A673 (cell line): ENCODE measurements at regions of chr7 and their contacts with region 1.

Region 1: DNA sequence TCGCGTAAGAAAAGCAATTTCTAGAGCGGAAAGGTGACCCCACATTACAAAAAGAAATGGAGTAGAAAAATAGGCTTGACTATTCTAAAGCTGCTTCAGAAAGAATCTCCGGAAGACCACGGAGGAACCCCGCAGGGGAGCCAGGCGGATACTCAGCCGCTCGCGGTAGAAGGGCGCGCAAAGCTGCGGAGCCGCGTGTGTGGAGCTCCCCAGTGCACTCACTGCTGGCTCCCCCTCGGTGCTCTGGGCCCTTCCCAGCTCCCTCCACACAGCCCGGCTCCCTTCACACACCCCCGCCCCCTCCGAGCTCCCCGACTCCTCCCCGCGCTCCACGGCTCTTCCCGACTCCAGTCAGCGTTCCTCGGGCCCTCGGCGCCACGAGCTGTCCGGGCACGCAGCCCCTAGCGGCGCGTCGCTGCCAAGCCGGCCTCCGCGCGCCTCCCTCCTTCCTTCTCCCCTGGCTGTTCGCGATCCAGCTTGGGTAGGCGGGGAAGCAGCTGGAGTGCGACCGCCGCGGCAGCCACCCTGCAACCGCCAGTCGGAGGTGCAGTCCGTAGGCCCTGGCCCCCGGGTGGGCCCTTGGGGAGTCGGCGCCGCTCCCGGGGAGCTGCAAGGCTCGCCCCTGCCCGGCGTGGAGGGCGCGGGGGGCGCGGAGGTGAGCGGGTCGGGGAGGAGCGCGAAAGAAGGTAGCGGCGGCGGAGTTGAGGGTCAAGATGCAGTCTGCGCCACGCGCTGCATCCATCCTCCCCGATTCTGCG is at the start of gene STEAP2:
- DNase-seq: peak; percentile 99
- H3K4me3 ChIP-seq: peak within 1 kb of the TSS; percentile 88
- H3K27ac ChIP-seq: peak within 1 kb of the TSS; percentile 98
- H3K4me1 ChIP-seq: peaks cover 38% of the 10 kb centered on the region
- H3K27me3 ChIP-seq: no peaks in the 10 kb centered on the region
- CTCF ChIP-seq: peak; percentile 82
- total RNA-seq, gene STEAP2: 114 and 134 TPM in 2 replicates

Region 2: DNA sequence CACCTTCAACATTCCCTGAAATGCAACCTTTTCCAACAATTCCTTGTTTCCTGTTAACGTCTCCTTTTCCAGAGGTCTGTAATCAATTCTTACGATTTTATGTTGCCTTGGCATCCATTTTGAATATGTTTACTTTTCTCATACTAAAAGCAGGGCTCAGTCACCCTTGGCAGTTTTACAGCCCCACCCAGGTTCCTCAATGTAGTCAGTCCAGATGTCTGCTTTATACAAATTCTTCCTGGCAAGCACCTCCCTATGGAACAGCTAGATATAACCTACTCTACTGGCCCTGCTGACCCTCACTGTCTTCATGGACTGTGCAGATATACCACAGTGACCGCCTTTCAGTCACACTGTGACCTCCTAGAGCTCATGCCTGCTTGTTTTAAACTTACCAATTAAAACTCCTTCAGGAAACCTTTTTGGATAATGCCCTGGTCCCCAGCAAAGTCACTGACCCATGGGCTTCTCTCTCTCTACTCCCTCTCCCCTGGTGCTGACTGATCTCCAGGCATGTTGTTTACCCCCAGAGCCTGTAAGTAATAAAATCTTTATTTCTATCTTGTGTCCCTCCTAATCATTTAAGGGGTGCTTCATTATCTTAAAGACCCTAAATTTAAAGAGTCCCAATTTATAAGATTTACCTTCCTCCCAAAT is 204.4 kb before region 1 on chr7:
- CTCF ChIA-PET with region 1: no interaction called
- POLR2A ChIA-PET with region 1: no interaction called
- intact Hi-C with region 1: no loop called
- DNase-seq: no peak
- H3K4me3 ChIP-seq: no peak overlapping the region
- H3K27ac ChIP-seq: no peak overlapping the region
- H3K4me1 ChIP-seq: no peaks in the 10 kb centered on the region
- H3K27me3 ChIP-seq: peaks cover 37% of the 10 kb centered on the region
- CTCF ChIP-seq: no peak

Region 3: GRCh38 chr7:90178679-90179278 is 32.8 kb before region 1 on chr7:
- CTCF ChIA-PET with region 1: no interaction called
- POLR2A ChIA-PET with region 1: no interaction called
- intact Hi-C with region 1: no loop called
- DNase-seq: peak; percentile 56
- H3K4me3 ChIP-seq: peak overlapping the region; percentile 8
- H3K27ac ChIP-seq: peak overlapping the region; percentile 70
- H3K4me1 ChIP-seq: peaks cover 23% of the 10 kb centered on the region
- H3K27me3 ChIP-seq: no peaks in the 10 kb centered on the region
- CTCF ChIP-seq: no peak

Region 4: GRCh38 chr7:90194911-90195809 is 16.4 kb before region 1 on chr7:
- CTCF ChIA-PET with region 1: no interaction called
- POLR2A ChIA-PET with region 1: interaction called, 26 read pairs
- intact Hi-C with region 1: no loop called
- DNase-seq: no peak
- H3K4me3 ChIP-seq: no peak overlapping the region
- H3K27ac ChIP-seq: no peak overlapping the region
- H3K4me1 ChIP-seq: no peaks in the 10 kb centered on the region
- H3K27me3 ChIP-seq: no peaks in the 10 kb centered on the region
- CTCF ChIP-seq: no peak

Region 5: GRCh38 chr7:90271753-90272152 is 60.2 kb after region 1 on chr7:
- CTCF ChIA-PET with region 1: no interaction called
- POLR2A ChIA-PET with region 1: no interaction called
- intact Hi-C with region 1: no loop called
- DNase-seq: peak; percentile 10
- H3K4me3 ChIP-seq: no peak overlapping the region
- H3K27ac ChIP-seq: no peak overlapping the region
- H3K4me1 ChIP-seq: peaks cover 21% of the 10 kb centered on the region
- H3K27me3 ChIP-seq: no peaks in the 10 kb centered on the region
- CTCF ChIP-seq: no peak

Region 6: DNA sequence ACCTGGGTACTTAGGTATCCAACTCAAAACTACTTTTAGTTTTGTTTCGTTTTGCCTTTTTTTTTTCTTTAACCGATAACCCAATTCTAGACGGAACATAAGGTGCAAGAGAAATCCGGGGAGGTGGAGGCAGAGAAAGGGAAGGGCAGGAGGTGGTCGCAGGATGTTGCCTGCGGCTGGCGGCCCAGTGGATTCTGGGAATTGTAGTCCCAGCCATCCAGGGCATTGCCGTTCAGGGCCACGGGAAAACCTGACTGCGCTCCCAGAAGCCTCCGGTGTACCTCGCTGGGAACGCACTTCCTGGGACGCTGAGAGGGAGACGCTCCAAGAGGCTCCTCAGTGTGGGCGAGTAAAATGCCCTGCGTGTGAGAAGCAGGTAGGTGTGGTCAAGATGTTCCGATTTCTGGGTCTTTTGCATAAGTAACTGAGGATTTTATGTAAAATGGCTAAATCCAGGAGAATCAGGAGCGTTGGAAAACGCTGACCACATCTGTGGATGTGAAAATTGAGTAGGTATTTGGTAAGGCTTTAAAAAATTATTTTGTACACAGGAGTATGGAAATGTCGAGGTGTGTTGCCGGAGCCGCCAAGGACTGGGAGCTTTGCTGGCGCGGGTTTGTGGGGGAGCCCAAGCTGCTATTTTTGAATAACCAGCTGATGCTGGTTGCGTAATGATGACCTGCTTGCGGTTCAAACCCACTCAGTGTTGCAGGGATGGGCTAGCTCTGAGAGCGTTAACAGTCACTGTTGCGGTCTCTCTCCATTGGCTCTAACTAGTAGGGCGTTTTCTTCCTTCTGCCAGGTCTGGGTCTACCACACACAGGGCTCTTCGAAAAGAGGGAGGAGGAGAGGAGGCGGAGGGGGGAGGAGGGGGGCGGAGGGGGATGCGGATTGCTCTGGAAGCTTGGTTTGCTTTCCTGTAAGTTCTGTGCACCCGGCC is 191.9 kb after region 1 on chr7 and contains the start of gene CLDN12:
- CTCF ChIA-PET with region 1: no interaction called
- POLR2A ChIA-PET with region 1: no interaction called
- intact Hi-C with region 1: loop called (anchors 5 kb)
- DNase-seq: peak; percentile 95
- H3K4me3 ChIP-seq: peak within 1 kb of the TSS; percentile 74
- H3K27ac ChIP-seq: peak within 1 kb of the TSS; percentile 68
- H3K4me1 ChIP-seq: peaks cover 37% of the 10 kb centered on the region
- H3K27me3 ChIP-seq: no peaks in the 10 kb centered on the region
- CTCF ChIP-seq: no peak
- total RNA-seq, gene CLDN12: 32.9 and 35.1 TPM in 2 replicates

Region 7: DNA sequence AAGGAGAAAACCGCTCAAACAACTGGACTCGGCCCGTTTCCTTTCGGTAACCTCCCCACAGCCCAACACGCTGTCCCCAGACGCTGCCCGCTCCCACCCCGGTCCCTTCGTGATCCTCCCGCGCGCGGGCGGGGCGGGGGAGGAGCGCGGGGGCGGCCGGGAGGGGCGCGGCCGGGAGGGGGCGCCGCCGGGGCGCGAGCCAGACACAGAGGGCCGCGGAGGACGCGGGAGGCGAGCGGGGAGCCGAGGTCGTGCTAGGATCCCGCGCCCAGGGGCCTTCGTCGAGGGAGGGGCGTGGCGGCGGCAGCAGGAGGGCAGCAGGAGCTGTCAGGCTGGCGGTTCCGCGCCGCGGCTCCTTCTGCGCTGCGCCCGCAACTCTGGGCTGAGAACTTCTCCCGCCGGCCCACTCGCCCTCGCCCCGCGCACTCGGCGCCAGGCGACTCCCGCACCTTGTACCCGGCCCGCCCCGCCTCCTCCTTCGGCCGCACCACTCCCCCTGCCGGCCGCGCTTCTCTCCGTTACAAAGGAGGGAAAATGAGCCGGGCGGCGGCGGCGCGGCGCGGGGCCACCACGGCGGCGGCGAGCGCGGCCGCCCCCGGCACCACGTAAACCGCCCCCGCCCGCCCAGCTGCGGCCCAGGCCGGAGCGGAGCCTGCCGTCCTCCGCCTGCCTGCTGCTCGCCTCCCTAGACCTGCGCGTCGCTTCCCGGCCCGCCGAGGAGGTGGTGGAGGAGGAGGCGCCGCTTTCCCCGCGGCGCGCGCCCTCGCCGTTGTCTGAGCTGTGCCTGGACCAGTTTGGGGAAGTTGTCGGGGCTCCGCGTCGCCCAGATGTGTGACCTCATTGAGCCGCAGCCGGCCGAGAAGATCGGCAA is 384.5 kb after region 1 on chr7 and contains the start of gene CDK14:
- CTCF ChIA-PET with region 1: no interaction called
- POLR2A ChIA-PET with region 1: interaction called, 10 read pairs
- intact Hi-C with region 1: loop called (anchors 1 kb)
- DNase-seq: peak; percentile 86
- H3K4me3 ChIP-seq: peak within 1 kb of the TSS; percentile 69
- H3K27ac ChIP-seq: peak within 1 kb of the TSS; percentile 94
- H3K4me1 ChIP-seq: peaks cover 46% of the 10 kb centered on the region
- H3K27me3 ChIP-seq: no peaks in the 10 kb centered on the region
- CTCF ChIP-seq: peak; percentile 43
- total RNA-seq, gene CDK14: 128 and 131 TPM in 2 replicates

Region 8: DNA sequence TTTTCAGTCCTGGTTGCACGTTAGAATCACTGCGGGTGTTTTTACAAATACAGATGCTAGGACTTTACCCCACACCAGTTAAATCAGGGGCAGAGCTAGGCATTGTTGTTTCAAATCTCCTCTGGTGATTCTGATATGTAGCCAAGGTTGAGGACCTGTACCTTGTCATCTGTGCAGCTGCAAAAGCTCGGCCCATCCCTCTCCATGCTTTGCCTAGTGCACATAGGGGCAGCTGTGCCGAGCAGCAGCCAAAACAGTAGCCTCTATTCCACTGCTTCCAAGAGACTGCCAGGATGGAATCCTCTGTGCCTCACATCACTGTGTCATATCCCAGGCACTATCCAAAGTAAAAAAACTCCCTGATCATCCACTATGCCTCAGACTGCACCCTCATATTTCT is 565.9 kb after region 1 on chr7:
- CTCF ChIA-PET with region 1: no interaction called
- POLR2A ChIA-PET with region 1: no interaction called
- intact Hi-C with region 1: loop called (anchors 5 kb)
- DNase-seq: no peak
- H3K4me3 ChIP-seq: no peak overlapping the region
- H3K27ac ChIP-seq: peak overlapping the region; percentile 91
- H3K4me1 ChIP-seq: peaks cover 35% of the 10 kb centered on the region
- H3K27me3 ChIP-seq: no peaks in the 10 kb centered on the region
- CTCF ChIP-seq: no peak

Region 9: GRCh38 chr7:91869661-91870060 is 1658.1 kb after region 1 on chr7:
- CTCF ChIA-PET with region 1: no interaction called
- POLR2A ChIA-PET with region 1: no interaction called
- intact Hi-C with region 1: loop called (anchors 2 kb)
- DNase-seq: peak; percentile 39
- H3K4me3 ChIP-seq: no peak overlapping the region
- H3K27ac ChIP-seq: peak overlapping the region; percentile 99
- H3K4me1 ChIP-seq: peaks cover 72% of the 10 kb centered on the region
- H3K27me3 ChIP-seq: no peaks in the 10 kb centered on the region
- CTCF ChIP-seq: peak; percentile 44